ENCODE measurements at regions of chr7 and their contacts with region 1.

Region 1: GRCh38 chr7:82624337-82624736 is 180.8 kb upstream of the CACNA2D1 start:
- DNase-seq: peak; percentile 81
- H3K4me3 ChIP-seq: no peak overlapping the region
- H3K27me3 ChIP-seq: no peaks in the 10 kb centered on the region
- CTCF ChIP-seq: no peak

Region 2: DNA sequence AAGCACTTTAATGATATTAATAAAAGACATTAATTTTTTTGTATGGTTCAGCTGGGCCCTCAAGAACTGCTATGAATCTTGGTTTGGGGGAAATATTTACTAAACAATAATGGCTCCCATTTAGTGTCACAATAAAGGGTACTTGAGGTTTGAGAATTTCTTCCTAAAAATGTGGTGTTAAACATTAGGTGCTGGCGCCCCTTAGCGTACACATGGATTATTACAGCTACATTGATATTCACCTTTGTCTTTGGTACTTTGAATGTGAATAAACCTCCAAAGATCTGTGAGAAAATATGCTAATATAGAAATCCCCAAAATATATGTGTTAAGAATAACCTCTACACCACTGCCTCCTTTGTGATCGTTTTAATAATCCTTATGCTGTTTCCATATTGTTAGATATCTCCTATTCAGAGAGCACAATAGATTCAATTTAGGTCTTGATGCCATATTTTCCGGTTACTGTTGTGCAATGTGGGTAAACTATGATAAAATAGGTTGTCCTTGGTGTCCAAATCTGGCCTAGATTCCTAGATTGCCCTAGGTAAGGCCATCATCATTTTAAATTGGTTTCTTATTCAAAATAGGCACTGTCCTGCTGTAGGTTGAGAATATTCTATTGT is 19.0 kb before region 1 on chr7:
- CTCF ChIA-PET with region 1: interaction called, 16 read pairs
- POLR2A ChIA-PET with region 1: no interaction called
- DNase-seq: peak; percentile 1
- H3K4me3 ChIP-seq: no peak overlapping the region
- H3K27me3 ChIP-seq: no peaks in the 10 kb centered on the region
- CTCF ChIP-seq: peak; percentile 68

Region 3: DNA sequence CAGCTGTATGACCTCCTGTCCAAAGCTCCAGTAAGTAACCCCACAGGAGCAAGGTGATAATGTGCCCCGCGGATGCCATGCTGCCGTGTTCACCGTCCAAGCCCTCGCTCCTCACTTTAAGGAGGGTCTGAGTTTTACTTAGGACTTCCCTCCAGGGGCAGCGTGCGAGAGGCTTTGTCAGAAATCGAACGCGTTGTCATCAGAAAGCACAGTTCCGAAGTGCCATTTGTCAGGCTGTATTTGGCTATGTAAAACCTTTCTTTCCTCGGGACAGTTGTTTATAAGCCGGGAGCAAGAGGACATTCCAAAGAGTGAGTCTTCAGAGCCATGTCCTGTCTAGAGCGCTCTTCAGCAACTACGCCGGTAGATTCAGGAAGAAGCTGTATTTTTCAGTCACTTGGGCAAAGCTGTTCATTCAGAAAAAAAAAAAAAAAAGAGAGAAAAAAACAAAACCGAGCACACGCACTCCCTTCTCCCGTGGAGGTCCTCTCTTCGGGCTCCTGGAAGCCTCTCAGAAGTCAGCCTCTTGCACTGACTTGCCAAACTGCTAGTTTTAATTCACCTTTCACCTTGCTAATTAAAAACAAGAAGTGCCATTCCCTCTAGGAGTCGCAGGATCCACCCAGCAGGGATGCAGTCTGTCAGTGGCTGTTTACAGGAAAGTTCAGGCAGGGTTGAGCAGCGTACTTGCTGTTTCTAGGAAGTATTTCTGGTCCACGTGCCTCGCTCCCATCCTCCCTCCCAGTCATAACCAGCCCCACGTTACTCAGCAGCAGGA is 1024.3 kb after region 1 on chr7 and contains the start of gene SEMA3E:
- CTCF ChIA-PET with region 1: no interaction called
- POLR2A ChIA-PET with region 1: no interaction called
- DNase-seq: no peak
- H3K4me3 ChIP-seq: peak within 1 kb of the TSS; percentile 16; the same call in 1 of the 2 replicates
- H3K27me3 ChIP-seq: 0 out of 2 replicates have a peak, but pooled peaks cover 3% of the 10 kb centered on the region
- CTCF ChIP-seq: no peak
- polyA plus RNA-seq, gene SEMA3E: 0.01 TPM in 1 of 2 replicates, not detected in the other